Aorta (tissue), 5 donors: ENCODE measurements at regions of chr5 and their contacts with region 1.

Region 1: DNA sequence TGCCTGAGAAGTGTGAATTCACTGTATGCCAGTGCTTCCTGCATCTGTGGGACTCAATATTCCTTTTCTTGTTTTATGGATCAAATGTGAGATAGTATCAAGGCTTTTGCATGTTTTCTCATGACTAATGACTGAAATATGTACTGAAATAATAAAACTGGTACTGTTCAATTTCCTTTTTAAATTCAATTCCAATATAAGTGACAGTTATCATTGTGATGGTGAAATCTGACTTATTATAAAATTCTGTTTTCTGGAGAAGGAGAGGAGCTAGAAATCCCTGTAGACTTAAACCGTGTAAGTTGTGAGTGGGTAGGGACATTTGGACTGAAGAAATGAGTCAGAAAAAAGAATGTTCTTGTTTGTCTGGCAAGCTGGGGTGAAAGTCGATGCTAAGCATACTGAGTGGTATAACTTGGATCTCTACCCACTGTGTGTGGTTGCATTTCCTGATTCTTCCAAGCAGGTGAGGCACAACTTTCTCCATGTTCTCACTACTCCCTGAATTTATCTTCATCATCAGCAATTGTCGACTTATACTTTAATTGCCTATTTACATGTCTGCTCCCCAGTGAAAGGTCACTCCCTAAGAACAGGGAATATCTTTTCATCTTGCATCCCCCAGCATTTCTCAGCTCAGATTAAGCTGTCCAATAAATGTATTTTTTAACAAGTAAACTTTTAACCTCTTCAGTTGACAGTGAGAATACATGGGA is 245.0 kb downstream of the EFNA5 start:
- DNase-seq: no peak
- ATAC-seq: no peak
- H3K4me3 ChIP-seq: no peak overlapping the region
- H3K27ac ChIP-seq: no peak overlapping the region
- H3K4me1 ChIP-seq: peaks cover 1 to 2% of the 10 kb centered on the region in 2 donors
- H3K27me3 ChIP-seq: no peaks in the 10 kb centered on the region

Region 2: GRCh38 chr5:107340631-107341030 is 85.1 kb before region 1 on chr5:
- intact Hi-C with region 1: no loop called
- DNase-seq: no peak
- ATAC-seq: no peak
- H3K4me3 ChIP-seq: no peak overlapping the region
- H3K27ac ChIP-seq: no peak overlapping the region
- H3K4me1 ChIP-seq: no peaks in the 10 kb centered on the region
- H3K27me3 ChIP-seq: peaks cover 0 to 1% of the 10 kb centered on the region in 2 donors

Region 3: GRCh38 chr5:107469485-107470294 is 44.0 kb after region 1 on chr5:
- intact Hi-C with region 1: loop called (anchors 5 kb)
- DNase-seq: no peak
- ATAC-seq: no peak
- H3K4me3 ChIP-seq: no peak overlapping the region
- H3K27ac ChIP-seq: peak overlapping the region; percentile 42 to 70
- H3K4me1 ChIP-seq: peaks cover 1 to 16% of the 10 kb centered on the region in 2 donors
- H3K27me3 ChIP-seq: no peaks in the 10 kb centered on the region

Region 4: DNA sequence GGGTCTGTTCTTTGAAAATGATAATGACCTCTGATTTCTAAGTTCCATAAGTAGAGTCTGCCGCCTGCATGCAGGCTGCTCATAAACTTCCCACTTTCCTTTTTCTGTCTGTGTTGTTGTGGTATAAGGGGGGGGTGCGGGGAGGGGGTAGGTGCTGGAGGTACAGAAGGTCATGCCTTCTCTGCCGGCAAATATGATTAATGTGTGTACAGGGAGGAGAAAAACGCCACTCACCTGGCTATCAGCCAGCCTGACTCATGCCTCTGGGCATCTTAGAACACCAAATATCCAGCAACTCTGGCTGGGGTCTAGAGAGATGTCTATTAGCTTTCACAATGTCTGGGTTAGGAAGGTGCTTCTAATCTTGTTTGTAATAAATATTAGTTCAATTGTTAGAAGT is 116.7 kb after region 1 on chr5:
- intact Hi-C with region 1: loop called in 1 of 2 experiments (anchors 10 kb)
- DNase-seq: peak; percentile 86 to 93
- ATAC-seq: peak; percentile 82
- H3K4me3 ChIP-seq: peak overlapping the region in 1 of 2 donors; percentile 41
- H3K27ac ChIP-seq: no peak overlapping the region
- H3K4me1 ChIP-seq: peaks cover 4 to 8% of the 10 kb centered on the region in 2 donors
- H3K27me3 ChIP-seq: no peaks in the 10 kb centered on the region

Region 5: GRCh38 chr5:107571621-107572536 is 146.2 kb after region 1 on chr5:
- intact Hi-C with region 1: loop called in 1 of 2 experiments (anchors 10 kb)
- DNase-seq: peak; percentile 93 to 98
- ATAC-seq: peak; percentile 95
- H3K4me3 ChIP-seq: peak overlapping the region; percentile 42 to 73
- H3K27ac ChIP-seq: peak overlapping the region in 1 of 2 donors; percentile 31
- H3K4me1 ChIP-seq: peaks cover 0 to 7% of the 10 kb centered on the region in 2 donors
- H3K27me3 ChIP-seq: no peaks in the 10 kb centered on the region

Region 6: DNA sequence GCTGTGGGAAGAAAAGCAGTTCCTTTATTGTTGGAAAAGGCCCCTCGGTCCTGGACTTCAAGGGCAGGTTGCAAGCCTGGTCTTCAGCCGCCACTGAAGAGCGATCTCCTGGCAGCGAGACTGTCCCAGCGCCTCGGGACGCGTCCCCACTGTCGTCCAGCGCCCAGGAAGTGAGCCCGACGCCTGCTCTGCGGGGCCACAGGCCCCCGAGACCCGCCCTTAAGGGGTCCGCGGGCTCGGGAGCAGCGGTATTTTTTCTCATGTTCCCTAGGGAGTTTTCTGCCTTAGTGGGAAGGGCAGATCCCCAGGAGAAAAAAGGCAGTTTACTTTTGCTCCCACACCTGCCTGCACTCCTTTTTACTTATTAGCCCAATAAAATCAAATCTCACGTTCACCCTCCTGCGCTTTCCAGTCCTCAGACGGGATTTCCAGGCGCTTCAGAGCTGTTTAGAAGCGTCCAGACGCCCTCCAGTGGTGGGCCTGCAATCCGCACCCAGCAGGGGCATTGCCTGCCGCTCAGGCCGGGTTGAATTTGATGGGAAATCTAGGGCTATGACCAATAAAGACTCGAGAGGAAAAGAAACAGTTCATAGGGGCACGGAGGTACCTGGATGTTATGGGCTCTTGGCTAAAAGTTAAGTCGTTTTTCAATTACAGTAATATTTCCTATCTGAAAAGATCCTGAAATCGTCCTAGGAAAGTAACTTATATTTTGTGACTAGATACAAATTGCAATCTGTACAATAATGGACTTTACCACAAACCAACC is 247.9 kb after region 1 on chr5:
- intact Hi-C with region 1: loop called (anchors 10 kb)
- DNase-seq: peak; percentile 89 to 97
- ATAC-seq: peak; percentile 87
- H3K4me3 ChIP-seq: peak overlapping the region; percentile 1 to 63
- H3K27ac ChIP-seq: peak overlapping the region in 1 of 2 donors; percentile 62
- H3K4me1 ChIP-seq: no peaks in the 10 kb centered on the region
- H3K27me3 ChIP-seq: no peaks in the 10 kb centered on the region